ENCODE measurements at regions of chr1 and their contacts with region 1.

Region 1: GRCh38 chr1:231383159-231383860 is 38.8 kb downstream of the EGLN1 start:
- DNase-seq: peak; percentile 85
- H3K4me3 Mint-ChIP-seq: no peak overlapping the region
- H3K27ac Mint-ChIP-seq: no peak overlapping the region
- H3K4me1 Mint-ChIP-seq: peaks cover 15% of the 10 kb centered on the region
- H3K27me3 Mint-ChIP-seq: no peaks in the 10 kb centered on the region
- CTCF ChIP-seq: no peak

Region 2: GRCh38 chr1:231395076-231395995 is 12.0 kb after region 1 on chr1:
- CTCF ChIA-PET with region 1: interaction called, 3 read pairs
- POLR2A ChIA-PET with region 1: interaction called, 14 read pairs
- intact Hi-C with region 1: no loop called
- DNase-seq: peak; percentile 88
- H3K4me3 Mint-ChIP-seq: peak overlapping the region; percentile 52
- H3K27ac Mint-ChIP-seq: peak overlapping the region; percentile 79
- H3K4me1 Mint-ChIP-seq: peaks cover 72% of the 10 kb centered on the region
- H3K27me3 Mint-ChIP-seq: no peaks in the 10 kb centered on the region
- CTCF ChIP-seq: no peak

Region 3: GRCh38 chr1:231407547-231408396 is 24.5 kb after region 1 on chr1:
- CTCF ChIA-PET with region 1: interaction called, 3 read pairs
- POLR2A ChIA-PET with region 1: interaction called, 14 read pairs
- intact Hi-C with region 1: no loop called
- DNase-seq: peak; percentile 68
- H3K4me3 Mint-ChIP-seq: no peak overlapping the region
- H3K27ac Mint-ChIP-seq: no peak overlapping the region
- H3K4me1 Mint-ChIP-seq: peaks cover 15% of the 10 kb centered on the region
- H3K27me3 Mint-ChIP-seq: no peaks in the 10 kb centered on the region
- CTCF ChIP-seq: no peak

Region 4: DNA sequence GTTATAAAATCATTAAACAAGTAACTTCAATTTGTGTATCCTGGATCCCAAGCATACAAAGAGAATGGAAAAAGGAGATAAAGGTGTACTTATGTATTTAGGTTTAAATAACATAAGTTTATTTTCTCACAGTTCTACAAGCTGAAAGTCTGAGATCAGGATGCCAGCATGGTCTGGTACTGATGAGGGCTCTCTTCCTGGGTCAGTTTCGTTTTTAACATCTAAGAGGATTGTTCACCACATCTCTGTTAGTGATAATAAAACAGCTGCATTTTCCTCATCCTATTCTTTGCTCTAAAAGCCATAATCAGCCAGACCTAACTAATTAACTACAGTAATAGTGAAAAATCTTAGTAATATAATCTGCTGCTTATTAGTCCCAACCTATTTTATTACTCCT is 33.6 kb after region 1 on chr1:
- CTCF ChIA-PET with region 1: interaction called, 5 read pairs
- POLR2A ChIA-PET with region 1: interaction called, 247 read pairs
- intact Hi-C with region 1: loop called (anchors 2 kb)
- DNase-seq: no peak
- H3K4me3 Mint-ChIP-seq: peak overlapping the region; percentile 82
- H3K27ac Mint-ChIP-seq: peak overlapping the region; percentile 4
- H3K4me1 Mint-ChIP-seq: peaks cover 54% of the 10 kb centered on the region
- H3K27me3 Mint-ChIP-seq: no peaks in the 10 kb centered on the region
- CTCF ChIP-seq: no peak